AG04450 (cell line): ENCODE measurements at regions of chr12 and their contacts with region 1.

Region 1: DNA sequence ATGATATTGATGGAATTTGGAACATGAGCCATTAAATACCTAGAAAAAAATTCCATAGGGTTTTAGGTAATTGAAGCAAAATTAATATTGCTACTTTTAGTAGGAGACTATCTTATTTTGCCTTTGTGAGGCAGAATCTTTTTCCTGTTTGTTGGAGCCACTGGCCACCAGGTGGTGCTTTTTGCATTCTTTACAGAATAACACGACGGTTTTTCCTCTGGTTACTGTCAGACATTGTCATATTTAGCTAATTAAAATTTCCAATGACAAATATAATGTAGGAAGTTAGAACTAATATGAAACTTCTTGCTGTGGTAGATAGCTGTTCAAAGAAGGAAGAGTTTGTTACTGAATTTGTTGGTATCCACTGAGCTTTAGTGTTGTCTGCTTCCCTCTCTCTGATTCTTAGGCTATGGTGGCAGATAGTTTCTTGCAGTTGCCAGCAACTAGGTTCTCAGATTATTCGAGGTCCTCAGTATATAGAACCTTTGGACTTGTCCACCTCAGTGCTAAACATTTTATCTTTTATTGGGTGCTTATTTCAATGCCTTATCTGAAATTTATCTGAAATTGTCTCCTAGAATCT is 25.7 kb downstream of the RAB21 start:
- DNase-seq: no peak
- H3K4me3 ChIP-seq: no peak overlapping the region
- H3K27ac ChIP-seq: no peak overlapping the region
- H3K27me3 ChIP-seq: no peaks in the 10 kb centered on the region
- CTCF ChIP-seq: peak; percentile 78

Region 2: GRCh38 chr12:71645268-71645667 is 135.1 kb before region 1 on chr12:
- CTCF ChIA-PET with region 1: no interaction called
- POLR2A ChIA-PET with region 1: no interaction called
- DNase-seq: no peak
- H3K4me3 ChIP-seq: no peak overlapping the region
- H3K27ac ChIP-seq: no peak overlapping the region
- H3K27me3 ChIP-seq: no peaks in the 10 kb centered on the region
- CTCF ChIP-seq: no peak

Region 3: DNA sequence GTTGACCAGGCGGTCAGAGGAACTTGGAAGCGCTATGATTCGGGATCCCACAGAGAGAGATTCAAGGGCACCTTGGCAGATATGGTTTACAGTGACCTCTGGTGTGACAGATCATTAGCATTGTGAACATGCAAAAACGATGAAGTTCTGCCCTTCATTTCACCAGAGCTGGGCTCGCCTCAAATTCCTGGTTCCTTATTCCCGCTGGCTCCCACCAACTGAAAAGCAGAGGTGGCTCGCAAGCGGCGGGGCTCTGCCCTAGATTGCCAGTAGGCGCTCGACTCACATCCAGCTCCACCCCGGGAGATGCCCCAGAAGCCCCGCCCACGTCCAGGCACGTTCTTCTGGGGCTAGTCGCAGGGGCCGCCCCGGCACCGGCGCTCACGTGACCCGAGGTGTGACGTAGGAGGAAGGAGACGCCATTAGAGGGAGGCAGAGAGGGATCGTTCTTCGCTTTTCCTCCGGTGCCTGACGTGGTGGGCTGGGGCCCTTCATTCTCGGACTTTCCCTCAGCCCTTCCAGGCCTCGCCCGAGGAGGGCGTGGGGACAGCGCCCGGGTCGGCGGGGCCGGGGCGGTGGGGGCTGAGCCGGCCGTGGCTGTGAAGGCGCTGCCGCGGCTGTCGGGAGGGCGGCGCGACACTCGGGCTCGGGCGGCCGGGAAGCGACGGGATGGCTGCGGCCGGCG is 25.7 kb before region 1 on chr12 and contains the start of gene RAB21:
- CTCF ChIA-PET with region 1: interaction called, 33 read pairs
- POLR2A ChIA-PET with region 1: no interaction called
- DNase-seq: peak; percentile 88
- H3K4me3 ChIP-seq: peak within 1 kb of the TSS; percentile 89
- H3K27ac ChIP-seq: peak within 1 kb of the TSS; percentile 85
- H3K27me3 ChIP-seq: peaks cover 12% of the 10 kb centered on the region
- CTCF ChIP-seq: peak; percentile 34
- polyA plus RNA-seq, gene RAB21: 15.6 and 18.6 TPM in 2 replicates

Region 4: DNA sequence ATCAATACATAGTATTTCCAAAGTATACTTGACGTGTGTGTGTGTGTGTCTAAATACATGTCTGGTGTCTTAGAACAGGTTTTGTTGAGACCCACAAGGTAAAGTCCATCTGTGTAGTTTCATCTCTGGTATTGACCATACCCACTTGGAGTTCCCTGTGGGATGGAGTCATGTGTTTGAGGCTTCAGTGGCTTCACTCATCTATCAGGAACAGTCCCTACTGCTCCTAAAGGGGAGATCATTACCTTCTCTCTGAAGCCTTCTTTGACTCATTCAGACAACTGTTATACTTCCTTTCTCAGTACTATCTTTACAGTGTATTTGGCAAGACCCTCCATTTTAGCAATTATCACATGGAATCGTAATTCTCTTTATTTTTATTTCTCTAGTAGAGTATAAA is 11.4 kb before region 1 on chr12:
- CTCF ChIA-PET with region 1: interaction called, 24 read pairs
- POLR2A ChIA-PET with region 1: no interaction called
- DNase-seq: no peak
- H3K4me3 ChIP-seq: no peak overlapping the region
- H3K27ac ChIP-seq: no peak overlapping the region
- H3K27me3 ChIP-seq: no peaks in the 10 kb centered on the region
- CTCF ChIP-seq: no peak

Region 5: GRCh38 chr12:71840231-71840847 is 60.0 kb after region 1 on chr12:
- CTCF ChIA-PET with region 1: interaction called, 77 read pairs
- POLR2A ChIA-PET with region 1: no interaction called
- DNase-seq: peak; percentile 44
- H3K4me3 ChIP-seq: peak overlapping the region; percentile 90
- H3K27ac ChIP-seq: peak overlapping the region; percentile 95
- H3K27me3 ChIP-seq: no peaks in the 10 kb centered on the region
- CTCF ChIP-seq: no peak

Region 6: GRCh38 chr12:71900091-71900490 is 119.8 kb after region 1 on chr12:
- CTCF ChIA-PET with region 1: interaction called, 14 read pairs
- POLR2A ChIA-PET with region 1: no interaction called
- DNase-seq: no peak
- H3K4me3 ChIP-seq: no peak overlapping the region
- H3K27ac ChIP-seq: no peak overlapping the region
- H3K27me3 ChIP-seq: no peaks in the 10 kb centered on the region
- CTCF ChIP-seq: peak; percentile 43